GM23248 (cell line): ENCODE measurements at regions of chr17 and their contacts with region 1.

Region 1: DNA sequence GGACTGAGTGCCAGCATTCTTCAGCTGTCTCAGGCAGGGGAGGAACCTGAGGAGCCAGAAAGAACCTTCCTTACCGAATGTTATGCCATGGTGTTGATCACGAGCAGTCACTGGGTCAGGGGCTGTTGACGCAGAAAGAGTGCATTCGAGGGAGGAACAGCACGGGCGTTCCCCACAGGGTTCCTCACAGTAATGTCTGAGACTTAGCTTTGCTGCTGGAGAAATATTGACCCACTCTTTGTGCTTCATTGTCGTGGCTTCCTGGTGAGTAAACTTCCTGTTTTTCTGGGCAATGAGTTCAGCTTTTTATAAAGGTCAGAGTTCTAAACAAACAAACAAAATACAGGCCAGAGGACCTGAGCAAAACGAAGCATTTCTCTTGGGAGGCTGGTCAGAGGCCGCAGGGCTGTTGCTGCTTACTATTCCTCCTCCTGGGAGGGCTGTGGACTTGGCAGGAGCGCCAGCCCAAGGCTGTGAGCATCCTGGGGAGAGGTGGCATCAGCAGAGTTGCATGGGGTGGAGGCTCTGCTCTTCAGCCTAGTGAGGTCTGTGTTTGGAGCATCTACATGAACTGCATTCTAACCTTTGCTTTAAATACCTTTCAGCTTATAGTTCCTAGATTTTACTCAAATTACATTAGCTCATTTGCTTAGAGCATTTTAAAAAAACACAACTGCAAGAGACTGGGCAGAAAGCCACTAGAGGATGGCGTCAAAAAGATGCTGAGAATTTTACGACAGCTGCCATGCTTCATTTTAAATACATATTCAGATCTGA is 143.1 kb upstream of the CACNG5 start:
- DNase-seq: peak; percentile 49
- H3K4me3 ChIP-seq: no peak overlapping the region
- H3K27ac ChIP-seq: no peak overlapping the region
- H3K4me1 ChIP-seq: peaks cover 8% of the 10 kb centered on the region; the same call in 1 of the 2 replicates
- H3K27me3 ChIP-seq: no peaks in the 10 kb centered on the region

Region 2: GRCh38 chr17:65261682-65262636 is 1429.9 kb before region 1 on chr17:
- in situ Hi-C with region 1: loop called (anchors 25 kb)
- DNase-seq: peak; percentile 61
- H3K4me3 ChIP-seq: peak overlapping the region; percentile 37
- H3K27ac ChIP-seq: no peak overlapping the region
- H3K4me1 ChIP-seq: peaks cover 14% of the 10 kb centered on the region
- H3K27me3 ChIP-seq: no peaks in the 10 kb centered on the region

Region 3: GRCh38 chr17:66466840-66467367 is 224.9 kb before region 1 on chr17:
- in situ Hi-C with region 1: loop called (anchors 25 kb)
- DNase-seq: peak; percentile 98
- H3K4me3 ChIP-seq: peak overlapping the region; percentile 56
- H3K27ac ChIP-seq: peak overlapping the region; percentile 95
- H3K4me1 ChIP-seq: peaks cover 59% of the 10 kb centered on the region
- H3K27me3 ChIP-seq: no peaks in the 10 kb centered on the region

Region 4: GRCh38 chr17:66612993-66613392 is 78.8 kb before region 1 on chr17:
- in situ Hi-C with region 1: no loop called
- DNase-seq: no peak
- H3K4me3 ChIP-seq: no peak overlapping the region
- H3K27ac ChIP-seq: no peak overlapping the region
- H3K4me1 ChIP-seq: no peaks in the 10 kb centered on the region
- H3K27me3 ChIP-seq: no peaks in the 10 kb centered on the region

Region 5: DNA sequence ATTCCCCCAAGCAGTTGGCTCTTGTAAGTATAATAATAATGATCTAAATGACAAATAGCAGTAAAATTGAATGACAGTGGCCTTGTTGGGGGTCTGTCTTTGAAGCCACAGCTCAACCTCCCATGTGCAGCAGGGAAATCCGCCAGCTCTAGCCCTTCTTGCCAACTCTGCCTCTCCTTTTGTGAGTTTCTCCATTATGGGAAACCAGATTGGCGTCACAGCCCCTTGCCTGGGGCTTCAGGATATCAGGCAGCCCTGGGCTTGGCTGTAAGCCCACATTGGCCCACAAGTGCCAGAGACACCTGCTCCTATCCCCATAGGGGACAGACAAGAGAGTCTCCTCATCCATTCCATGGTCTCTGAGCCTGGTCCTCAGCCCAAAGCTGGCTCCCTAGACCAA is 72.7 kb after region 1 on chr17:
- in situ Hi-C with region 1: no loop called
- DNase-seq: no peak
- H3K4me3 ChIP-seq: no peak overlapping the region
- H3K27ac ChIP-seq: no peak overlapping the region
- H3K4me1 ChIP-seq: no peaks in the 10 kb centered on the region
- H3K27me3 ChIP-seq: no peaks in the 10 kb centered on the region

Region 6: DNA sequence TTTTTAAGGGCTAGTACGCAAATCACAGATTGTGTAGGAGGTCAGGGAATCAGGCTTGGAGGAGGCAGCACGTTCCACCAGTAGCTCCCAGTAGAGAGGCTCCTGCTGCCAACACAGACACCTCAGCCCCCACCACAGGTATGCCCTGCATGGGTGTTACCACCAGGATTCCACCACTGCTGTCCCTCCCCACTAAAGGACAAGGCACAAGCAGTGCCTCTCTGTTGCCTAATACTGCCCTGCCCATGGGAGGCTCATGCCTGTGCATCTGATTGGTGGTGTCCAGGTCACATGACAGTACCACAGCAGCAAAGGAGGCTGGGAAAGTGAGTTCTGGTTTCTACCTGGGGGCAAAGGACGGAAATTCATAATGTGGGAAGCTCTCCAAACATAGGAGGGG is 239.1 kb after region 1 on chr17:
- in situ Hi-C with region 1: no loop called
- DNase-seq: no peak
- H3K4me3 ChIP-seq: no peak overlapping the region
- H3K27ac ChIP-seq: no peak overlapping the region
- H3K4me1 ChIP-seq: no peaks in the 10 kb centered on the region
- H3K27me3 ChIP-seq: peaks cover 51% of the 10 kb centered on the region